ENCODE measurements at regions of chr16 and their contacts with region 1.

Region 1: GRCh38 chr16:75471723-75472633 is 7.5 kb upstream of the TMEM170A start:
- DNase-seq: peak in 1 of 2 donors; percentile 34
- H3K4me3 ChIP-seq: no peak overlapping the region
- H3K27ac ChIP-seq: no peak overlapping the region
- H3K4me1 ChIP-seq: no peaks in the 10 kb centered on the region
- H3K27me3 ChIP-seq: no peaks in the 10 kb centered on the region
- CTCF ChIP-seq: peak; percentile 52 to 82 (median 79)
- POLR2A ChIP-seq: no peak

Region 2: GRCh38 chr16:75550211-75550662 is 78.3 kb after region 1 on chr16:
- intact Hi-C with region 1: loop called (anchors 2 kb)
- DNase-seq: peak in 1 of 2 donors; percentile 74
- H3K4me3 ChIP-seq: peak overlapping the region in 2 of 3 donors; percentile 21 to 40
- H3K27ac ChIP-seq: peak overlapping the region; percentile 56 to 80
- H3K4me1 ChIP-seq: no peaks in the 10 kb centered on the region
- H3K27me3 ChIP-seq: no peaks in the 10 kb centered on the region
- CTCF ChIP-seq: peak in 2 of 3 donors; percentile 41 to 57
- POLR2A ChIP-seq: no peak

Measured in breast epithelium (tissue), 4 donors.